Activated T-helper 2 cell treated with anti-CD3 and anti-CD28 coated beads, Interferon-gamma antibody, Interleukin-2, Interleukin-4, amounts not matched to agents 10 μg/mL and 5 μg/mL and 100 μg/mL, durations not matched to agents 14 hours and 24 hours and 36 hours (primary cell): ENCODE measurements at regions of chr12 and their contacts with region 1.

Region 1: GRCh38 chr12:31631784-31632183 is 27.7 kb upstream of the ETFBKMT start:
- DNase-seq: no peak
- H3K4me3 Mint-ChIP-seq: no peak overlapping the region
- H3K27ac Mint-ChIP-seq: no peak overlapping the region
- H3K4me1 Mint-ChIP-seq: no peaks in the 10 kb centered on the region
- H3K27me3 Mint-ChIP-seq: no peaks in the 10 kb centered on the region

Region 2: GRCh38 chr12:31250179-31250578 is 381.6 kb before region 1 on chr12:
- intact Hi-C with region 1: loop called (anchors 5 kb)
- DNase-seq: no peak
- H3K4me3 Mint-ChIP-seq: no peak overlapping the region
- H3K27ac Mint-ChIP-seq: no peak overlapping the region
- H3K4me1 Mint-ChIP-seq: no peaks in the 10 kb centered on the region
- H3K27me3 Mint-ChIP-seq: peaks cover 5% of the 10 kb centered on the region

Region 3: GRCh38 chr12:31406345-31406744 is 225.4 kb before region 1 on chr12:
- intact Hi-C with region 1: loop called (anchors 1 kb)
- DNase-seq: no peak
- H3K4me3 Mint-ChIP-seq: no peak overlapping the region
- H3K27ac Mint-ChIP-seq: no peak overlapping the region
- H3K4me1 Mint-ChIP-seq: peaks cover 4% of the 10 kb centered on the region
- H3K27me3 Mint-ChIP-seq: peaks cover 5% of the 10 kb centered on the region